ENCODE measurements at regions of chr13 and their contacts with region 1.

Region 1: GRCh38 chr13:39602614-39603366 is at the start of gene LHFPL6:
- DNase-seq: peak; percentile 74 to 86 (median 85)
- H3K4me3 ChIP-seq: peak within 1 kb of the TSS; percentile 86
- H3K27ac ChIP-seq: peak within 1 kb of the TSS; percentile 89 to 93
- H3K4me1 ChIP-seq: peaks cover 8% of the 10 kb centered on the region
- H3K27me3 ChIP-seq: no peaks in the 10 kb centered on the region
- CTCF ChIP-seq: peak in 1 of 3 donors; percentile 22
- EP300 ChIP-seq: no peak
- POLR2A ChIP-seq: peak; percentile 60
- total RNA-seq, gene LHFPL6: 19.7 to 69.3 (median 41.5) TPM

Region 2: DNA sequence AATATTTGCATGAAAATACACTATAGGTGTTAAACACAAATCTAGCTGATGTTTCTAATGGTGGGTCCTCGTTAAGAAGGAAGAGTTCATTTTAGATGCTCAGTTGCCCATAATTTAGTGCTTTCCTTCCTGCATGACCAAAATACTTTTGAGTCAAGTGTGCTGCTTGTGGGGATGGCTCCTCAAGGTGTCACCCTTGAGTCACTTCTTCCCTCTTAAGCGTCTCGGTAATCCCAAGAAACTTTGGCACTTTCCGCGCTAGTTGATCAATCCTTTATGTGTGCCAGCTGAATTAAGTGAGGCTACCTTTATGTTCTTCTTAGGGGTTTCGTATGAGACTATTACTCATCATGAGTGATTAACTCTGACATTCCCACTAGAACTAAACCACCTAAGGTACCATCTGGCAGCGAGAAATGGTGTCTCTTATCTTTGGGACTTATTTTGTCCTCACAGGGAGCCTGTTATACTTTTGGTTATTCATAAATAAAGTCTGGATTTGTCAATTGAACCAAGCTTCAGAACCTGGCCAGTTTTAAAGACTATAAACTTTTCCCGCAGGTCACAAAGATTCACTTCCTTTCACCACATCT is 457.8 kb before region 1 on chr13:
- intact Hi-C with region 1: loop called in 1 of 4 experiments (anchors 10 kb)
- DNase-seq: peak; percentile 44 to 74 (median 55)
- H3K4me3 ChIP-seq: no peak overlapping the region
- H3K27ac ChIP-seq: no peak overlapping the region
- H3K4me1 ChIP-seq: no peaks in the 10 kb centered on the region
- H3K27me3 ChIP-seq: no peaks in the 10 kb centered on the region
- CTCF ChIP-seq: peak in 2 of 3 donors; percentile 59 to 65
- EP300 ChIP-seq: no peak
- POLR2A ChIP-seq: no peak

Region 3: GRCh38 chr13:39406688-39407087 is 196.1 kb before region 1 on chr13:
- intact Hi-C with region 1: loop called in 2 of 4 experiments (anchors 5 to 10 kb)
- DNase-seq: no peak
- H3K4me3 ChIP-seq: no peak overlapping the region
- H3K27ac ChIP-seq: no peak overlapping the region
- H3K4me1 ChIP-seq: peaks cover 9% of the 10 kb centered on the region
- H3K27me3 ChIP-seq: no peaks in the 10 kb centered on the region
- CTCF ChIP-seq: no peak
- EP300 ChIP-seq: no peak
- POLR2A ChIP-seq: no peak

Region 4: GRCh38 chr13:39415008-39415802 is 187.6 kb before region 1 on chr13:
- intact Hi-C with region 1: loop called in 1 of 4 experiments (anchors 10 kb)
- DNase-seq: peak; percentile 31 to 61 (median 57)
- H3K4me3 ChIP-seq: no peak overlapping the region
- H3K27ac ChIP-seq: peak overlapping the region in 1 of 2 donors; percentile 46
- H3K4me1 ChIP-seq: peaks cover 19% of the 10 kb centered on the region
- H3K27me3 ChIP-seq: no peaks in the 10 kb centered on the region
- CTCF ChIP-seq: no peak
- EP300 ChIP-seq: peak; percentile 56
- POLR2A ChIP-seq: no peak

Region 5: DNA sequence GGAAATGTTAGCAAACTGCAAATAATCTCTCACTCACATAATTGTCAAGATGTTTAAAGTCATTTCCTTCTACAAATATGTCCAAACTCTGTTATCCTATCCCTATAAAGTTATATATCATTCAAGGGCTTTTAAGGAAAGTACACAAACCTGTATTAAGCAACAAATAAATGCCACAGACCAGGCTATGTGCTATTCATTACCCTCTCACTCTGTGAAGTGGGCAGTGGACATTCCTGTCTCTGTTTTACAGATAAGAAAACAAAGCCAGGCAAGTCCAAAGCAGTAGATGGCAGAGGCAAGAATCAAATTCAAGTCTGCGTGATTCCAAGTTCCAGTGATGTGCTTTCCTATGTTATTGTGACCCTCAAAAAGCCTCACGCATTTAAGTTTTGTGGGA is 140.4 kb before region 1 on chr13:
- intact Hi-C with region 1: no loop called
- DNase-seq: no peak
- H3K4me3 ChIP-seq: no peak overlapping the region
- H3K27ac ChIP-seq: no peak overlapping the region
- H3K4me1 ChIP-seq: peaks cover 15% of the 10 kb centered on the region
- H3K27me3 ChIP-seq: no peaks in the 10 kb centered on the region
- CTCF ChIP-seq: no peak
- EP300 ChIP-seq: no peak
- POLR2A ChIP-seq: no peak

Measured in ovary (tissue), 10 donors.